Activated CD4-positive, alpha-beta T cell treated with anti-CD3 and anti-CD28 coated beads, Interleukin-2, amount 10 ng/mL, durations not matched to agents 7 days and 5 days (primary cell): ENCODE measurements at regions of chr2 and their contacts with region 1.

Region 1: GRCh38 chr2:68925295-68925896 is 27.3 kb downstream of the GKN2 start:
- DNase-seq: peak; percentile 74
- H3K4me3 Mint-ChIP-seq: no peak overlapping the region
- H3K27ac Mint-ChIP-seq: no peak overlapping the region
- H3K4me1 Mint-ChIP-seq: peaks cover 7% of the 10 kb centered on the region
- H3K27me3 Mint-ChIP-seq: peaks cover 10% of the 10 kb centered on the region

Region 2: GRCh38 chr2:68709421-68709911 is 215.9 kb before region 1 on chr2:
- CTCF ChIA-PET with region 1: interaction called, 19 read pairs
- POLR2A ChIA-PET with region 1: no interaction called
- DNase-seq: no peak
- H3K4me3 Mint-ChIP-seq: no peak overlapping the region
- H3K27ac Mint-ChIP-seq: no peak overlapping the region
- H3K4me1 Mint-ChIP-seq: peaks cover 38% of the 10 kb centered on the region
- H3K27me3 Mint-ChIP-seq: peaks cover 2% of the 10 kb centered on the region

Region 3: DNA sequence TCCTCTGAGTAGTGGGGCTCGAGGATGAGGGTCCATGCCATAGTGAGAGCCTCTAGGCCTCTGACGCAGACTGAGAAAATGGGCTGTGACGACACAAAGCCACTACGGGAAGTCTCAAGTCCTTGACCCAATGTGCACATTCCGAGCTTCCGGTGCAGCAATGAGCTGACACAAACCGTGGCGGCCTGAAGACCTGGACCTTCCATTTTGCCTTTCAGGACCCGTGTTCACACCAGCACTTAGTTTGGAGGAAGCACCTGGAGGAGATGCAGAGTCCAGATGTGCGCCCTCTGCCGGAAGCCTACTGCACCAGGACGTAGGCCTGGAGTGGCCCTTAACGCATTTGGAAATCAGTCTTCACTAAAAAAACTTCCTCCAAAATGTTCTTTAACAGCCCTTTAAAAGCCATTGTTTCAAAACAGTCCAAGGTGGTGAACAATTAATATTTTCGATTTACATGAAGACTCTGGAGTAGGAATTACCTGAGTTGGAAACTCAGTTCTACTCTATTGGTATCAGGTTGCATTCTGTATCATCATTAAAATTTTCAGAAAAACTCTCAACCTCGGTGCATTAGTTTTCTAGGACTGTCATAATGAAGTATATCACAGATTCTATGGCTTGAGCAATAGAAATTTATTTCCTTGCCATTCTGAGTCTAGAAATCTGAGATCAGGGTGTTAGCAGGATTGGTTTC is 88.1 kb before region 1 on chr2:
- CTCF ChIA-PET with region 1: interaction called, 13 read pairs
- POLR2A ChIA-PET with region 1: no interaction called
- DNase-seq: peak; percentile 71
- H3K4me3 Mint-ChIP-seq: no peak overlapping the region
- H3K27ac Mint-ChIP-seq: peak overlapping the region; percentile 54
- H3K4me1 Mint-ChIP-seq: peaks cover 45% of the 10 kb centered on the region
- H3K27me3 Mint-ChIP-seq: no peaks in the 10 kb centered on the region

Region 4: DNA sequence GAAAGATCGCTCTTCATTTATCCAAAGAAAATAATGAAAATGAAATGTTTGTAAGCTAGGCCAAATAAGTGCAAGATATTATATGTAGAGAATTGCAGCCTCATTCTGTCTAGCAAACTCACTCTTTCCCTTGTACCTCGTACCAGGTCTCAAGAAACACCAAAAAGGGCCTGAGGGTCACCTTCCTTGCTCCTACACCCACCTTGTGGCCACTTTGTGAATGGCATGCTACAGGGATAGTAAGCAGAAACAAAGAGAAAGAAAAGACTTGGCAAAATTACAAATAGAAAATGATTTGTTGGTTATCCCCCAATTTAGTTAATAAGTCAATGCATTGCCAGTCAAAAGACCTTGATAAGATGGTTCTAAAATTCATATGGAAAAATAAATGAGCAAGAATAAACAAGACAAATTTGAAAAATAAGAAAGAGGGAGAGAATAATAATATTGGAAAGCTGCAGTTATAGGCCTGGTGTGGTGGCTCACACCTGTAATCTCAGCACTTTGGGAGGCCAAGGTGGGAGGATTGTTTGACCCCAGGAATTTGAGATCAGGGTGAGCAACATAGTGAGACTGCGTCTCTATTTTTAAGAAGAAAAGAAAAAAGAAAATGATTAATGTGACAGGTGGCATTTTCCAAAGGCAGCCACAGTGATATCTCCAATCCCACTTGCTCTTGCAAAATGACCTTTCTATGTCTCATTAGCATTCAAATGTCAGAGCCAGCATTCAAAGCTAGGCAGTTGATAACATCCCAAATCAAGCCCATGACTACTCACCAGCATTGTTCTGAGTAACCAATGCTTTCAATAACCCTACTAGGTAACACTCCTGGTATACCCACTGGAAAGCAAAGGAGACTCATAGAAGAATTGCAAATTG is 15.4 kb before region 1 on chr2:
- CTCF ChIA-PET with region 1: interaction called, 13 read pairs
- POLR2A ChIA-PET with region 1: no interaction called
- DNase-seq: peak; percentile 79
- H3K4me3 Mint-ChIP-seq: no peak overlapping the region
- H3K27ac Mint-ChIP-seq: peak overlapping the region; percentile 21
- H3K4me1 Mint-ChIP-seq: peaks cover 37% of the 10 kb centered on the region
- H3K27me3 Mint-ChIP-seq: no peaks in the 10 kb centered on the region

Region 5: DNA sequence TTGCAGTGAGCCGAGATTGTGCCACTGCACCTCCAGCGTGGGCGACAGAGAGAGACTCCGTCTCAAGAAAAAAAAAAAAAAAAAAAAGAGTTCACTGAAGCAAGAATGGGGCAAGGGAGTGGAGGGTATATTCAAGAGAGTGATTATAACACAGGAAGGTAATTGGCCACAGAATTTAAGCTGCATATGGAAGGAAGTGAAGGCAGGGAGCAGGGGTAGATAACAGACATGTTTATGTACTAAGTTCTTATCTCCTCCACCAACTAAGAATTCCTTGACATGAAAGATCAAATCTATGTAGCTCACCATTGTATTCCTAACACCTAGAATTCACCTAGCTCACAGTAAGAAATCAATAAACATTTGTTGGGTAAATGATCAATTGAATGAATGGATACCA is 10.0 kb before region 1 on chr2:
- CTCF ChIA-PET with region 1: interaction called, 13 read pairs
- POLR2A ChIA-PET with region 1: no interaction called
- DNase-seq: no peak
- H3K4me3 Mint-ChIP-seq: no peak overlapping the region
- H3K27ac Mint-ChIP-seq: no peak overlapping the region
- H3K4me1 Mint-ChIP-seq: peaks cover 7% of the 10 kb centered on the region
- H3K27me3 Mint-ChIP-seq: no peaks in the 10 kb centered on the region

Region 6: GRCh38 chr2:69012310-69013141 is 87.1 kb after region 1 on chr2:
- CTCF ChIA-PET with region 1: no interaction called
- POLR2A ChIA-PET with region 1: no interaction called
- DNase-seq: peak; percentile 47
- H3K4me3 Mint-ChIP-seq: peak overlapping the region; percentile 75
- H3K27ac Mint-ChIP-seq: no peak overlapping the region
- H3K4me1 Mint-ChIP-seq: peaks cover 18% of the 10 kb centered on the region
- H3K27me3 Mint-ChIP-seq: peaks cover 78% of the 10 kb centered on the region